ENCODE measurements at regions of chr1 and their contacts with region 1.

Region 1: DNA sequence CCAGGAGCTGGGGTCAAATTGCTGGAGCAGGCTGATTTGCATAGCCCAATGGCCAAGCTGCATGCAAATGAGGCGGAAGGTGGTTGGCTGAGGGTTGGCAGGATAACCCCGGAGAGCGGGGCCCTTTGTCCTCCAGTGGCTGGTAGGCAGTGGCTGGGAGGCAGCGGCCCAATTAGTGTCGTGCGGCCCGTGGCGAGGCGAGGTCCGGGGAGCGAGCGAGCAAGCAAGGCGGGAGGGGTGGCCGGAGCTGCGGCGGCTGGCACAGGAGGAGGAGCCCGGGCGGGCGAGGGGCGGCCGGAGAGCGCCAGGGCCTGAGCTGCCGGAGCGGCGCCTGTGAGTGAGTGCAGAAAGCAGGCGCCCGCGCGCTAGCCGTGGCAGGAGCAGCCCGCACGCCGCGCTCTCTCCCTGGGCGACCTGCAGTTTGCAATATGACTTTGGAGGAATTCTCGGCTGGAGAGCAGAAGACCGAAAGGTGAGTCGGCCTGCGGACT is at the start of gene GADD45A:
- DNase-seq: peak; percentile 90 to 99 (median 93)
- ATAC-seq: peak; percentile 80
- H3K4me3 ChIP-seq: peak within 1 kb of the TSS; percentile 93
- H3K27ac ChIP-seq: peak within 1 kb of the TSS; percentile 95
- H3K4me1 ChIP-seq: peaks cover 18 to 33% of the 10 kb centered on the region in 2 experiments; a peak in 4 of 5 replicates
- H3K27me3 ChIP-seq: no peaks in the 10 kb centered on the region
- CTCF ChIP-seq: no peak
- EP300 ChIP-seq: no peak; the same call in 1 of the 2 replicates
- POLR2A ChIP-seq: peak; percentile 99
- RAD21 ChIP-seq: peak in 1 of 2 experiments; percentile 24; a peak in 2 of 4 replicates
- polyA plus RNA-seq, gene GADD45A: 21.3 to 22.4 TPM

Region 2: GRCh38 chr1:67430352-67431155 is 254.6 kb before region 1 on chr1 and contains the start of gene SERBP1:
- CTCF ChIA-PET with region 1: no interaction called
- POLR2A ChIA-PET with region 1: interaction called, 7 read pairs
- in situ Hi-C with region 1: no loop called
- intact Hi-C with region 1: loop called (anchors 10 kb)
- DNase-seq: peak; percentile 85 to 99 (median 90)
- ATAC-seq: peak; percentile 89
- H3K4me3 ChIP-seq: peak within 1 kb of the TSS; percentile 96
- H3K27ac ChIP-seq: peak within 1 kb of the TSS; percentile 98
- H3K4me1 ChIP-seq: peaks cover 14 to 19% of the 10 kb centered on the region in 2 experiments; a peak in 4 of 5 replicates
- H3K27me3 ChIP-seq: no peaks in the 10 kb centered on the region
- CTCF ChIP-seq: no peak; a peak in 1 of 6 replicates
- EP300 ChIP-seq: peak; percentile 5; the same call in 1 of the 2 replicates
- POLR2A ChIP-seq: peak; percentile 93
- RAD21 ChIP-seq: no peak
- polyA plus RNA-seq, gene SERBP1: 79.9 to 81.2 TPM

Region 3: GRCh38 chr1:67561704-67562113 is 123.4 kb before region 1 on chr1:
- CTCF ChIA-PET with region 1: no interaction called
- POLR2A ChIA-PET with region 1: interaction called, 14 read pairs
- in situ Hi-C with region 1: no loop called
- intact Hi-C with region 1: loop called (anchors 2 kb)
- DNase-seq: peak; percentile 78 to 92 (median 80)
- ATAC-seq: peak; percentile 91
- H3K4me3 ChIP-seq: no peak overlapping the region
- H3K27ac ChIP-seq: no peak overlapping the region
- H3K4me1 ChIP-seq: peaks cover 28 to 31% of the 10 kb centered on the region in 2 experiments; a peak in 4 of 5 replicates
- H3K27me3 ChIP-seq: no peaks in the 10 kb centered on the region
- CTCF ChIP-seq: peak; percentile 91 to 93 (median 91)
- EP300 ChIP-seq: no peak
- POLR2A ChIP-seq: no peak
- RAD21 ChIP-seq: peak; percentile 92

Region 4: GRCh38 chr1:67668660-67669059 is 16.5 kb before region 1 on chr1:
- CTCF ChIA-PET with region 1: no interaction called
- POLR2A ChIA-PET with region 1: interaction called, 62 read pairs
- in situ Hi-C with region 1: no loop called
- intact Hi-C with region 1: no loop called
- DNase-seq: no peak
- ATAC-seq: peak; percentile 55
- H3K4me3 ChIP-seq: no peak overlapping the region
- H3K27ac ChIP-seq: no peak overlapping the region
- H3K4me1 ChIP-seq: no peaks in the 10 kb centered on the region
- H3K27me3 ChIP-seq: no peaks in the 10 kb centered on the region
- CTCF ChIP-seq: no peak
- EP300 ChIP-seq: no peak
- POLR2A ChIP-seq: no peak
- RAD21 ChIP-seq: no peak

Region 5: DNA sequence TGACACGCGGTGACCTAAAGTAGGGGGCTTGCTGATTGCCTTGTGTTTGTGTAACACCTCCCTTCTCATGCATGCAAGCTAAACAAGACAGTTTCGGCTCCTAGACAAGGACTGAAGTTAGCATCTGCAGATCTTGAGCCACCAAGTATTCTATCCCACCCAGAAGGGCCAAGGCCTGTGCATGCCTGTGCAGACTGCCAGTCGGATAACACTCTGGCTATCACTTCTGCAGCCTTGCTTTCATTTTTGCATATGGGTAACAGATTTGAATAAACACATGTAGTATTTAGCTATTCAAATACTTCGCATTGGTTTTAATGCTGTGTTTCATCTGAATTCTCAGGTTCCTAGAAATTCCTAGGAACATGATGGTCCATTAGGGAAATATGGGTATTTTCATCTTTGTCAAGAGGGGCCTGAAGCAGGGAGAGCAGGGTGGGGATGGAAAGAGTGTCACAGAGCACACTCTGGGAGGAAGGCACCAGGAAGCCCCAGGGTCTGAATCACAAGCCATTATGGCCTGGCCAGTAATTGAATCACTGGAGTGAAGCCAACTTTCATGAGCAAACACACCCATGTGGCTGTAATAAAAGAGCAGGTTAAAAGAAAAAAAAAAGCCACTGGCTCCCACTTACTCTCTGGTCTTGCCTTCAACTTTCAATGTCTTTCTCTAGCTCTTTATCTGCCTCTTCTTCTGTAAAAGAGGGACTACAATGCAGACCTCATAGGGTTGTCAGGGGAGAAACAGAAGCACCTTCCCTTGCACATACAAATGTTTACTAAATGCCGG is 28.1 kb after region 1 on chr1:
- CTCF ChIA-PET with region 1: no interaction called
- POLR2A ChIA-PET with region 1: interaction called, 8 read pairs
- in situ Hi-C with region 1: no loop called
- intact Hi-C with region 1: loop called (anchors 1 kb)
- DNase-seq: peak in 3 of 4 experiments; percentile 28 to 81 (median 61)
- ATAC-seq: peak; percentile 60
- H3K4me3 ChIP-seq: no peak overlapping the region
- H3K27ac ChIP-seq: peak overlapping the region; percentile 70
- H3K4me1 ChIP-seq: peaks cover 26 to 52% of the 10 kb centered on the region in 2 experiments
- H3K27me3 ChIP-seq: no peaks in the 10 kb centered on the region
- CTCF ChIP-seq: no peak
- EP300 ChIP-seq: no peak
- POLR2A ChIP-seq: no peak
- RAD21 ChIP-seq: no peak

Region 6: DNA sequence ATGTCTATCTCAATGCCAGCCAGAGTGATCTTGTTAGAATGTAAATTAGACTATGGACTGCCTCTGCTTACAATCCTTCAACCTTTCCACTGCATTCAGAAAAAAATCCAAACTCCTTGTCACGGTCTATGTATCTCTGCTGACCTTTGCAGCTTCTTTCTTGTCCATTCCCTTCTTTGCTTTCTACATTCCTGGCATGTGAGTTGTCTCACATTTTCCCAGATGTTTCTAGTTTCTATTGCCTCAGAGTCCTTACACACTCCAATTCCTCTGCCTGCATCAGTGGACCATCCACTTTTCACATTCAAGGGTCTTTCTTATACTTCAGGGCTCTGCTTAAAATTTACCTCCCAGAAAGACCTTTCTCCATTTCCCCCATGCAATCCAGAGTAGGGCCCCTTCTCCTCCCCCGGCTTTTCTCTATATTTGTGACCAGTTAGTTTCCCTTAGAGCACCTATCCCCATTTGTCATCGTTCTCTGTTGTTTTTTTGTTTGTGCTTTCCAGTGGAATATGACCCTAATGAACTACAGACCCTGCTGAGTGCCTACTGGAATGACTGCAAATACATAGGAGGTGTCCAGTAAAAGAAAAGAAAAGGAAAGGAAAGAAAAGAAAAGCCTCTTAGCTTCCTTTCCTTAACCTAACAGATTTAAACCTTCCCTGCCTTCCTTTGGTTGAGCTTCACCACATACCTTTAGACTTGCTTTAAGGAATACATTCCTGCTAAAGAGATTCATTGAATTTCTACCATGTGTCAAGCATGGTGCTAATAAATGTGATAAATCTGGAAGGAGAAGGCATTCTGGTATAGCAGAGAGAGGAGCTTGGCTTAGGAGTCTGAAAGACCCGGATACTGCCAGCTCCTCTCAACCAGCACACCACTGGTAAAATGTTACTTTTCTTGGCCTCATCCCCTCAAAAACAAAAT is 263.3 kb after region 1 on chr1:
- CTCF ChIA-PET with region 1: no interaction called
- POLR2A ChIA-PET with region 1: no interaction called
- in situ Hi-C with region 1: no loop called
- intact Hi-C with region 1: no loop called
- DNase-seq: no peak
- ATAC-seq: no peak
- H3K4me3 ChIP-seq: no peak overlapping the region
- H3K27ac ChIP-seq: no peak overlapping the region
- H3K4me1 ChIP-seq: no peaks in the 10 kb centered on the region; a peak in 1 of 5 replicates
- H3K27me3 ChIP-seq: peaks cover 0 to 11% of the 10 kb centered on the region in 2 experiments; a peak in 4 of 5 replicates
- CTCF ChIP-seq: no peak
- EP300 ChIP-seq: no peak
- POLR2A ChIP-seq: no peak
- RAD21 ChIP-seq: no peak

Region 7: GRCh38 chr1:68232354-68233148 is 547.4 kb after region 1 on chr1 and contains the start of gene WLS:
- CTCF ChIA-PET with region 1: no interaction called
- POLR2A ChIA-PET with region 1: no interaction called
- in situ Hi-C with region 1: no loop called
- intact Hi-C with region 1: no loop called
- DNase-seq: no peak
- ATAC-seq: no peak
- H3K4me3 ChIP-seq: no peak within 1 kb of the TSS
- H3K27ac ChIP-seq: no peak within 1 kb of the TSS
- H3K4me1 ChIP-seq: no peaks in the 10 kb centered on the region; a peak in 2 of 5 replicates
- H3K27me3 ChIP-seq: peaks cover 18 to 28% of the 10 kb centered on the region in 2 experiments; a peak in 3 of 5 replicates
- CTCF ChIP-seq: no peak
- EP300 ChIP-seq: no peak
- POLR2A ChIP-seq: no peak
- RAD21 ChIP-seq: no peak
- polyA plus RNA-seq, gene WLS: not detected